Activated B cell treated with CpG ODN at 0.5 μM for 24 hours (primary cell): ENCODE measurements at regions of chr1 and their contacts with region 1.

Region 1: GRCh38 chr1:10494754-10495474 is 20.2 kb downstream of the PEX14 start:
- DNase-seq: peak; percentile 70
- ATAC-seq: peak; percentile 90
- H3K4me3 Mint-ChIP-seq: peak overlapping the region; percentile 81
- H3K27ac Mint-ChIP-seq: peak overlapping the region; percentile 91
- H3K4me1 Mint-ChIP-seq: peaks cover 21% of the 10 kb centered on the region
- H3K27me3 Mint-ChIP-seq: no peaks in the 10 kb centered on the region
- CTCF ChIP-seq: peak; percentile 94

Region 2: GRCh38 chr1:10378081-10378841 is 116.7 kb before region 1 on chr1:
- CTCF ChIA-PET with region 1: interaction called, 20 read pairs
- POLR2A ChIA-PET with region 1: no interaction called
- intact Hi-C with region 1: loop called (anchors 1 kb)
- DNase-seq: no peak
- ATAC-seq: no peak
- H3K4me3 Mint-ChIP-seq: no peak overlapping the region
- H3K27ac Mint-ChIP-seq: no peak overlapping the region
- H3K4me1 Mint-ChIP-seq: peaks cover 2% of the 10 kb centered on the region
- H3K27me3 Mint-ChIP-seq: no peaks in the 10 kb centered on the region
- CTCF ChIP-seq: no peak

Region 3: DNA sequence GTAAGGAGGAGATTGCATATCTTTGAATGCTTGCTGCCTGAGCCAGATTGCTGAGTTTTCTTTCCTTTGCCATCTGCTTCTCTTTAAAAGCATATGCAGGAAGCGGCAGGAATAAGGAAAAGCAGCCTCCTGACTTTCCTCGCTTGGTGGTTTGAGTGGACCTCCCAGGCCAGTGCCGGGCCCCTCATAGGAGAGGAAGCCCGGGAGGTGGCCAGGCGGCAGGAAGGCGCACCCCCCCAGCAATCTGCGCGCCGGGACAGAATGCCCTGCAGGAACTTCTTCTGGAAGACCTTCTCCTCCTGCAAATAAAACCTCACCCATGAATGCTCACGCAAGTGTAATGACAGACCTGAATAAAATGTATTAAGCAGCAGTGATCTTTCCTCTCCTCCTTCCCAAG is 43.6 kb before region 1 on chr1:
- CTCF ChIA-PET with region 1: no interaction called
- POLR2A ChIA-PET with region 1: interaction called, 11 read pairs
- intact Hi-C with region 1: no loop called
- DNase-seq: no peak
- ATAC-seq: no peak
- H3K4me3 Mint-ChIP-seq: no peak overlapping the region
- H3K27ac Mint-ChIP-seq: no peak overlapping the region
- H3K4me1 Mint-ChIP-seq: no peaks in the 10 kb centered on the region
- H3K27me3 Mint-ChIP-seq: no peaks in the 10 kb centered on the region
- CTCF ChIP-seq: no peak

Region 4: DNA sequence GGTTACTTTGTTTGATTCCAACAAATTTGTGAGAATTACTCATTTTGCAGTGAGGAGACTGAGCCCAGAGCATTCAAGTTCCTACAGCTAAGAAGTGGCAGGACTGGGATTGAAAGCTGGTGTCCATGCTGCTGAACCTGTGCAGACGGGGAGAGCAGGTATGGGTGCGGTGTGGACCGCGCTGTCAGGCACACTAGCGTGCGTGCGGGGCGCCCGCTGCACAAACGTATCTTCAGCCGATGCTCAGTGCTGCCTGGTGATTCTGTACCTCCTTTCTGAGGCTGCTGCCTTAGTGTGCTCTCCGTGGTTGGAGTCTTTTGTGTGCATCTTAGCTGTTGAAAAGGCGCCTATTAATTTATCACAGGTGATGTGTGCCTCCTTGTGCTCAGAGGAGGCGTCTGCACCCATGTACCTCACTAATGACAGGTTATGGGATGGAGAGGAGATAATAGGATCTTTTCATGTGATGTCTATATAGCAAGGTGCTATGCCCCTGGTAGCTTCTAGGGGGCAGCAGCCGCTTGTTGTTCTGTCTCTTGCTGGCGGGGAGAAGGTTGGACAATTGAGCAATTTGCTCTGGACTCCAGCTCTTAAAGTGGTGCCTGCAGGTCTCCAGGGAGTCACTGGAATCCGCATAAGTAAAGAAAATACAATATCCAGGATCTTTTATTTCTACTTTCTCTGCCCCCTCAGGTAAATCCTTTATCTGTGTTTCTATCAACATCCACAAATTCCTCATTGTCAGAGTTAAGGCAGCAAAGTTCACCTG is 12.4 kb after region 1 on chr1:
- CTCF ChIA-PET with region 1: interaction called, 50 read pairs
- POLR2A ChIA-PET with region 1: interaction called, 4 read pairs
- intact Hi-C with region 1: loop called (anchors 1 kb)
- DNase-seq: no peak
- ATAC-seq: peak; percentile 67
- H3K4me3 Mint-ChIP-seq: peak overlapping the region; percentile 44
- H3K27ac Mint-ChIP-seq: no peak overlapping the region
- H3K4me1 Mint-ChIP-seq: peaks cover 38% of the 10 kb centered on the region
- H3K27me3 Mint-ChIP-seq: no peaks in the 10 kb centered on the region
- CTCF ChIP-seq: no peak

Region 5: DNA sequence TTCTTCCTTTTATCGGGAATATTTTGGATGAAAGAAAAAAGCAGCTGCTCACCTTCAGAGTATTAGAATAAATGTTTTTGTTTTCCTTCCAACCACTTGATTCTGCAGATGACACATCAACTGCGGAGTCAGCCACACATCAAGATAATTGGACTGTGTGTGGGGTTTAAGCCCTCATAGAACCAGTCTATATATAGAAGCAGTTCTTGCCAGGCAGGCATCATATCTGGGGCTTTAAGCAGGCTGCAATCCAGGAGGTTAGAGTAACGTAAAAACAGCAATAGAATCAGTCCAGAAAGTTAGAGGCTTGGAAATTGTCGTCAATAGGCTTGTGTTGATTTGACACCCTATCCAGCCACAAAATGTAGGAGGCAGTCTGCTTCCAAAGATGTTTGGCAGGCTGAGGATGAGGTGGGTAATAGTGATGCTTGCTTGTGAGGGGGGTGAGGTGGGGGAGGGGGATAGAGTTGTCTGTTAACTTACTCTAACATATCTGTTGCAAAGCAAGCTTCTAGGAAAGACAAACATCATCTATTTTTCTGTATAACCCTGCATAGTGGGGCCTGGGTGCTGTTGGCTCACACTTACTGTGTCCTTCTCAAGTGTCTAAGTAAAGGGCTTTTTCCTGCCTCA is 44.6 kb after region 1 on chr1:
- CTCF ChIA-PET with region 1: no interaction called
- POLR2A ChIA-PET with region 1: no interaction called
- intact Hi-C with region 1: no loop called
- DNase-seq: no peak
- ATAC-seq: no peak
- H3K4me3 Mint-ChIP-seq: no peak overlapping the region
- H3K27ac Mint-ChIP-seq: no peak overlapping the region
- H3K4me1 Mint-ChIP-seq: no peaks in the 10 kb centered on the region
- H3K27me3 Mint-ChIP-seq: no peaks in the 10 kb centered on the region
- CTCF ChIP-seq: no peak

Region 6: DNA sequence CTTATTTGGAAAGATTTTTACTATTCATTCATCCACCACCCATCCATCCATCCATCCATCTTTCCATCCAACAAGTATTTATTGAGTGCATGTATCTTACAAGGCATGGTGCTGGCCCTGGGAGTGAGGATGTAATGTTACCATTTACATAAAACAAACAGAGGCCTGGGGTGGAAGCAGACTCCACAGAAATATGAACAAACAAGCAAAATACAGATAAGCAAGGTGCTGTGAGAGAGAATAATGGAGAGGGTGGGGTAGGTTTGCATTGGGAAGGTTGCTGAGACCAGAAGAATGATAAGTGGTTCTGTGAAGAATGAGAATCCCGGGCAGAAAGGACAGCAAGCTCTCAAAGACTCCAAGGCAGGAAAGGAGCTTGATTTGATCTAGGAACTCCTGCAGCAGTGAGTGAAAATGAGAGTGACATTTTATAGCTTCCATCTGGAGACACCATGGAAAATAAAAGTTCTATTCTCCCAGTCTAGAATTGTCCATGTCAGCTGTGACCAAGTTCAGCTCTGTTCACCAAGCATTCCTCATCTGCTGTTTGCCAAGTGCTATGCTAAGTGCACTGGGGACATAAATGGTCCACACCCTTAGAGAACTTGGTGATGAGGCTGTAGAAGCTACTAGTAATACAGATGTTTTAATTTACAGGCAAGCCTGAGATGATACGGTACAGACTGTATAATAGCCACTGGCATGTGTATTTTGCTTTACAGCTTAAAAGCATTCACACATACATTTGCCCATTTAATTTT is 55.2 kb after region 1 on chr1:
- CTCF ChIA-PET with region 1: no interaction called
- POLR2A ChIA-PET with region 1: no interaction called
- intact Hi-C with region 1: no loop called
- DNase-seq: no peak
- ATAC-seq: no peak
- H3K4me3 Mint-ChIP-seq: no peak overlapping the region
- H3K27ac Mint-ChIP-seq: no peak overlapping the region
- H3K4me1 Mint-ChIP-seq: peaks cover 4% of the 10 kb centered on the region
- H3K27me3 Mint-ChIP-seq: no peaks in the 10 kb centered on the region
- CTCF ChIP-seq: no peak

Region 7: DNA sequence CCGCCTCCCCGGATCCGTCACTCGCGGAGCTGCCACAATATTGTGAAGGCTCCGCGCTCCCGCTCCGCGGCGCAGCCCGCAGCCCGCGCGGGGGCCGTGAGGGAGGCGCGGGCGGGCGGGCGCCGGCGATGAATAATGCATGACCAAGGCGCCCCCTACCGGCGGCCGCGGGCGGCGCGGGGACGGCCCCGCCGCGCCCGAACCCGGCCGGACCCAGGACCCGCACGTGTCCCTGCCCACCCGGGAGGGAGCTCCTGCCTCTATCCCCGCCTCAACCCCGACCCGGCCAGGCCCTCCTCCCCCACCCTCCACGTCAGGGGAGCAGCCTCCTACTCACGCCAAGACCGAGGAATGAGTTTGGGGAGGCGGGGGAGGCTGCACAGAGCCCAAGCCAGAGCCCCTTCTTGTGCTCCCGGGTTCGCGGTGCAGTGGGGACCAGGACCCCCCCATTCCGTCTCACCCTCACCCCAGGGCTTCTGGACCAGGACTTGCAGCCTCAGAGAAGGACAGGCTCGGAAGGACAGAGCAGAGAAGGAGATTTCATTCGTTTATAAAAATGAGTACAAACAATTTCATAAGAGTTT is 372.3 kb after region 1 on chr1:
- CTCF ChIA-PET with region 1: interaction called, 19 read pairs
- POLR2A ChIA-PET with region 1: interaction called, 4 read pairs
- intact Hi-C with region 1: loop called (anchors 1 kb)
- DNase-seq: peak; percentile 66
- ATAC-seq: peak; percentile 81
- H3K4me3 Mint-ChIP-seq: no peak overlapping the region
- H3K27ac Mint-ChIP-seq: no peak overlapping the region
- H3K4me1 Mint-ChIP-seq: peaks cover 12% of the 10 kb centered on the region
- H3K27me3 Mint-ChIP-seq: peaks cover 58% of the 10 kb centered on the region
- CTCF ChIP-seq: no peak

Region 8: GRCh38 chr1:10941891-10942541 is 447.1 kb after region 1 on chr1:
- CTCF ChIA-PET with region 1: interaction called, 9 read pairs
- POLR2A ChIA-PET with region 1: no interaction called
- intact Hi-C with region 1: loop called (anchors 1 kb)
- DNase-seq: peak; percentile 50
- ATAC-seq: peak; percentile 60
- H3K4me3 Mint-ChIP-seq: no peak overlapping the region
- H3K27ac Mint-ChIP-seq: no peak overlapping the region
- H3K4me1 Mint-ChIP-seq: peaks cover 13% of the 10 kb centered on the region
- H3K27me3 Mint-ChIP-seq: peaks cover 35% of the 10 kb centered on the region
- CTCF ChIP-seq: peak; percentile 50

Region 9: GRCh38 chr1:11227106-11228077 is 732.5 kb after region 1 on chr1:
- CTCF ChIA-PET with region 1: no interaction called
- POLR2A ChIA-PET with region 1: no interaction called
- intact Hi-C with region 1: no loop called
- DNase-seq: no peak
- ATAC-seq: peak; percentile 75
- H3K4me3 Mint-ChIP-seq: peak overlapping the region; percentile 64
- H3K27ac Mint-ChIP-seq: peak overlapping the region; percentile 86
- H3K4me1 Mint-ChIP-seq: peaks cover 57% of the 10 kb centered on the region
- H3K27me3 Mint-ChIP-seq: no peaks in the 10 kb centered on the region
- CTCF ChIP-seq: no peak